ENCODE measurements at regions of chr1 and their contacts with region 1.

Region 1: DNA sequence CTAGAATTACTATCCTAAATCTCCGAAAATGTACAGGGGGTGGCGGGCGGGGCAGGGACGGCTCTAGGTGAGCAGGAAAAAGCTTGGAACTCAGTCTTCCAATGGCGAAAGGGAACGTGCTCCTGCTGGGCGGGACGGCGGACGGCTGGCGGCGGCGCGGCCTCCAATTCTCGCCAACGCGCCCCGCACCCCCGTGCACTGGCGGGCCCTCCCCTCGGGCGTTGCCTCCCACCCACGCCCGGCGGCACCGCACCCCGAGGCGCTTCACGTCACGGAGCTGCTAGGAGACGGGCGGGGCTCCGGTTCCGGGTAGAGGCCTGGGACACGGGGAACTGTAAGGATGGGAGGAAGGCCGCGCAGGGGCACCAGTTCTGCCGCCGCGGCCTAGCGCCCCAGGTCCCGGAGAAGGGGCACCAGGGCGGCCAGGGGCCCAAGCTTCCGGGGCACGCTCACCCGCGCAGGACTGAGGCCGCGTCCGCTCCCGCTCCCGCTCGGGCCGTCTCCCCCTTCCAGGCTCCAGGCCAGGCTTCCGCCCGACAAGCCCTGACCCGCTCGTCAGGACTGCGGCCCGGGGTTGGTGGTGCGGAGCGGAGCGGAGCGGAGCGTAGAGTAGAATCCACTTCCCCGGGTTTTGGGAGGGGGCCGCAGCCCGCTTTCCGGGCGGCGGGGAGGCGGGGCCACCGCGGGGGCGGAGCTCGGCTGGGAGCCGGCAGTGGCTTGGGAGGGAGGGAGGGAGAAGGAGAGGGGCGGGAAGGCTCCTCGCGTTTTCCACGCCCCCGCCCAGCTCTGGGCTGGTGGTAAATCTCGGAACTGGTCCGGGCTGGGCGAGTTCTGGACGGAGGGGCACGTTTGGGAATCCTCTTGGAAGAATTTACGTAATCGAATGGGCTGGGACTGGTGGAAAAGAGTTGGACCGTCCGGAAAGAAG is at the start of gene DDX59:
- DNase-seq: peak; percentile 83 to 95
- H3K4me3 ChIP-seq: peak within 1 kb of the TSS; percentile 75
- H3K27ac ChIP-seq: peak within 1 kb of the TSS; percentile 96
- H3K4me1 ChIP-seq: peaks cover 23% of the 10 kb centered on the region
- H3K27me3 ChIP-seq: no peaks in the 10 kb centered on the region
- CTCF ChIP-seq: no peak
- total RNA-seq, gene DDX59: 32.9 and 35.9 TPM in 2 replicates

Region 2: DNA sequence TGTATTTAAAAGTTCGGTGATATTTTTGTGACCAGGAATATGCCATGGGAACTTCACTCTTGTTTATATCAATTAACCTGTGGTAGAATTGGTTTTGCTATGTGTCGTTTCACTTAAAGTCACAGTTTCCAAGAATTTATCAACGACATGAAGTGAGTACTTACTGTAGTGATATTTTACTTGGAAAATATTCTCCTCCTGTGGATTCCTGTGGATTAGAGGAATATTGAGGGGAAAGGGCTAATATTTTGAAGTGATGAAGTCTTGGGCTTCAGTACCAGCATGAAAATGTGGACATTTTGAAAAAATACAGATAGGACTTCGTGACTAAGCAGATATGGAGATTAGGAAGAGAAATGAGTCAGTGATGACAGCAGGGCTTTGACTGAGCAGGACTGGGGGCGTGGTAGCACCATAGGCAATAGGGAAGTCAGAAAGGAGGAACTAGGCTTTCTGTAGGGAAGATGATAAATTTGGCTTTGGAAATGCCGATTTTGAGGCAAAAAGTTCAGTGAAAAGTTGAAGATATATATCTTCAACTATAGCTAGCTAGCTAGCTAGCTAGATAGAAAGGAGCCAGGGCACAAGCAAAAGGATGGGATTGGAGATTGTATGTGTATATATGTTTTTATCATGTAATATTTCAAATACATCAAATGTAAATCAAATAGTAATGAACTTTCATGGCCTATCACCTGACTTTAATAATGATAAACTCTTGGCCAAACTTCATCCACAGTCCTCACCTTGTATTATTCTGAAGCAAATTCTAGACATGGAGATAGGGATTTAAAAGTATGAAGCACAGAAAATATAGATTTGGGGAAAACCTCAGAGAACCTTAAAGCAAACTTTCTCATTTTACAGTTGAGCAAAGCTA is 29.5 kb before region 1 on chr1:
- CTCF ChIA-PET with region 1: no interaction called
- POLR2A ChIA-PET with region 1: interaction called, 17 read pairs
- intact Hi-C with region 1: loop called (anchors 1 kb)
- DNase-seq: peak; percentile 71 to 88
- H3K4me3 ChIP-seq: peak overlapping the region; percentile 10; the same call in 1 of the 2 replicates
- H3K27ac ChIP-seq: peak overlapping the region; percentile 86
- H3K4me1 ChIP-seq: peaks cover 45% of the 10 kb centered on the region
- H3K27me3 ChIP-seq: no peaks in the 10 kb centered on the region
- CTCF ChIP-seq: no peak

Region 3: GRCh38 chr1:200654660-200655059 is 14.9 kb before region 1 on chr1:
- CTCF ChIA-PET with region 1: interaction called, 3 read pairs
- POLR2A ChIA-PET with region 1: interaction called, 20 read pairs
- intact Hi-C with region 1: no loop called
- DNase-seq: no peak
- H3K4me3 ChIP-seq: no peak overlapping the region
- H3K27ac ChIP-seq: peak overlapping the region; percentile 61
- H3K4me1 ChIP-seq: peaks cover 27% of the 10 kb centered on the region
- H3K27me3 ChIP-seq: no peaks in the 10 kb centered on the region
- CTCF ChIP-seq: no peak

Region 4: GRCh38 chr1:200693327-200693726 is 23.7 kb after region 1 on chr1:
- CTCF ChIA-PET with region 1: no interaction called
- POLR2A ChIA-PET with region 1: interaction called, 25 read pairs
- intact Hi-C with region 1: no loop called
- DNase-seq: no peak
- H3K4me3 ChIP-seq: no peak overlapping the region
- H3K27ac ChIP-seq: no peak overlapping the region
- H3K4me1 ChIP-seq: no peaks in the 10 kb centered on the region
- H3K27me3 ChIP-seq: no peaks in the 10 kb centered on the region
- CTCF ChIP-seq: no peak

Region 5: DNA sequence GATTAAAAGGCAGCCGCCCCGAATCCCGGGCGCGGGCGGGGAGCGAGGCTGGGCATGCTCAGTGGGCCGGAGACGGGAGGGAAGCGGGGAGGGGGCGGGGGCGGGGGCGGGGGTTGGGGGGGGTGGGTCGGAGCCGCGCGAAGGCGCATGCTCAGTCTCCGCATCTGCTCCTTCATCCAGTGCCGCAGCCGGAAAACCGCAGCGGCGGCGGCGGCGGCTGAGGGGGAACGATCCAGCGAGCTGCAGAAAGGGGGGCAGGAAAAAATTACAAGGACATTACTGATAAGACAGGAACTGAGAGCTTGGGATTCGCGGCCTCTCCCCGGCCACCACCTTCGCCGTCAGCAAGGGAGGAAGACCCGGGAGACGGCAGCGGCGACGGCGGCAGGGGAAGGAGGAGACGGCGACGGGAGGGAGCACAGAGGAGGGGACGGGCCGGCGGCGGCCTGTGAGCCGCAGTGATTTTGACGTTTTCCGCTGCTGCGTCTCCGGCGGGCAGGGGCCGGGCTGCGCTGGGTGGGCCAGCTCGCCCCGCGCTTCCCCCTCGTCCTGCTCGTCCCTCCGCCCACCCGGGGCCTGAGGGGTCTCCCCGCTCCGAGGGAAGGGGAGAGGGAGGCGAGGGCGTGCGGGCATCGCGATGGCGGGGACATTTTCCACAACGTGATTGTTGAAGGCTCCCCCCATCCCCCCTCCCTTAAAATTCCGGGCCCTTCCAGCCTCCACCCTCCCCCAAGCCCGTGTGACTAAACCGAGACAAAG is 69.3 kb after region 1 on chr1 and contains the start of gene CAMSAP2:
- CTCF ChIA-PET with region 1: no interaction called
- POLR2A ChIA-PET with region 1: no interaction called
- intact Hi-C with region 1: loop called (anchors 1 kb)
- DNase-seq: peak; percentile 70 to 88
- H3K4me3 ChIP-seq: peak within 1 kb of the TSS; percentile 99
- H3K27ac ChIP-seq: peak within 1 kb of the TSS; percentile 91
- H3K4me1 ChIP-seq: peaks cover 40% of the 10 kb centered on the region
- H3K27me3 ChIP-seq: no peaks in the 10 kb centered on the region
- CTCF ChIP-seq: no peak
- total RNA-seq, gene CAMSAP2: 27.5 and 40.3 TPM in 2 replicates

Region 6: DNA sequence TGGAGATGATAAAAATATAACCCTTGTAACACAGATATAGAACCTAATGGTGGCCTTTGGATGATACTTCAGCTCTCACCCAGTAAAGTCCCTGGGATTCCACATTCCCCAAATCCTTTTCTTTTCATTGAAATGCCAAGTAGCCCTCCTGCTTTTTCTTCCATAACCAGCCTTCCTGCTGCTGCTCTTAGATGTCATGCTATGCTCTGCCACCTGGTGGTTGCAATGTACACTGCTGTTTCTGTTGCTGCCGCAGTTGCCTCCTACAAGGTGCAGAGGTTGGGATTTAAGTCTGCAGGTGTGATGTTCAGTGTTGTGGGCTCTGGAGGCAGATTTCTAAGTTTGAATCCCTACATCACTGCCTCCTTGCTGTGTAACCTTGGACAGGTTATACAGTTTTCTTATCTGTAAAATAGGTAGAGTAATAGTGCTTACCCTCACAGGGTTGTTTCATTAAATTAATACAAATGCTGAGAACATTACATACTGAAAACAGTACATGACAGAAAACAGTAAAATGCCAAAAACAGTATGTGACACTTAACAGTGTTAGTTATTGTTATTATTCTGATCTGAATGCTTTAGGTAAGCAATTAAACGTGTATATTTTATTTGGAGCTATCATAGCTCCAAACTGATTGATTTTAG is 133.4 kb after region 1 on chr1:
- CTCF ChIA-PET with region 1: no interaction called
- POLR2A ChIA-PET with region 1: no interaction called
- intact Hi-C with region 1: loop called (anchors 1 kb)
- DNase-seq: peak; percentile 57 to 74
- H3K4me3 ChIP-seq: no peak overlapping the region
- H3K27ac ChIP-seq: no peak overlapping the region
- H3K4me1 ChIP-seq: no peaks in the 10 kb centered on the region
- H3K27me3 ChIP-seq: no peaks in the 10 kb centered on the region
- CTCF ChIP-seq: peak; percentile 93

Region 7: GRCh38 chr1:201570886-201571624 is 901.5 kb after region 1 on chr1:
- CTCF ChIA-PET with region 1: no interaction called
- POLR2A ChIA-PET with region 1: no interaction called
- intact Hi-C with region 1: no loop called
- DNase-seq: no peak
- H3K4me3 ChIP-seq: no peak overlapping the region
- H3K27ac ChIP-seq: no peak overlapping the region
- H3K4me1 ChIP-seq: no peaks in the 10 kb centered on the region
- H3K27me3 ChIP-seq: no peaks in the 10 kb centered on the region
- CTCF ChIP-seq: no peak